Gastrocnemius medialis (tissue), 4 donors: ENCODE measurements at regions of chr4 and their contacts with region 1.

Region 1: GRCh38 chr4:94451695-94452475 is at the start of gene PDLIM5:
- DNase-seq: peak; percentile 88 to 92
- ATAC-seq: peak; percentile 74 to 78
- H3K4me3 ChIP-seq: peak within 1 kb of the TSS; percentile 81 to 96 (median 90)
- H3K27ac ChIP-seq: peak within 1 kb of the TSS; percentile 93 to 99 (median 99)
- H3K4me1 ChIP-seq: peaks cover 28 to 43% of the 10 kb centered on the region in 2 donors
- H3K27me3 ChIP-seq: no peaks in the 10 kb centered on the region
- CTCF ChIP-seq: no peak
- POLR2A ChIP-seq: peak; percentile 99
- total RNA-seq, gene PDLIM5: 473 to 833 (median 673) TPM

Region 2: GRCh38 chr4:94534401-94535312 is 82.8 kb after region 1 on chr4:
- in situ Hi-C with region 1: no loop called
- intact Hi-C with region 1: loop called (anchors 2 kb)
- DNase-seq: no peak
- ATAC-seq: peak; percentile 78 to 90
- H3K4me3 ChIP-seq: peak overlapping the region in 1 of 4 donors; percentile 3
- H3K27ac ChIP-seq: peak overlapping the region; percentile 68 to 85 (median 82)
- H3K4me1 ChIP-seq: peaks cover 95 to 100% of the 10 kb centered on the region in 2 donors
- H3K27me3 ChIP-seq: no peaks in the 10 kb centered on the region
- CTCF ChIP-seq: no peak
- POLR2A ChIP-seq: no peak

Region 3: DNA sequence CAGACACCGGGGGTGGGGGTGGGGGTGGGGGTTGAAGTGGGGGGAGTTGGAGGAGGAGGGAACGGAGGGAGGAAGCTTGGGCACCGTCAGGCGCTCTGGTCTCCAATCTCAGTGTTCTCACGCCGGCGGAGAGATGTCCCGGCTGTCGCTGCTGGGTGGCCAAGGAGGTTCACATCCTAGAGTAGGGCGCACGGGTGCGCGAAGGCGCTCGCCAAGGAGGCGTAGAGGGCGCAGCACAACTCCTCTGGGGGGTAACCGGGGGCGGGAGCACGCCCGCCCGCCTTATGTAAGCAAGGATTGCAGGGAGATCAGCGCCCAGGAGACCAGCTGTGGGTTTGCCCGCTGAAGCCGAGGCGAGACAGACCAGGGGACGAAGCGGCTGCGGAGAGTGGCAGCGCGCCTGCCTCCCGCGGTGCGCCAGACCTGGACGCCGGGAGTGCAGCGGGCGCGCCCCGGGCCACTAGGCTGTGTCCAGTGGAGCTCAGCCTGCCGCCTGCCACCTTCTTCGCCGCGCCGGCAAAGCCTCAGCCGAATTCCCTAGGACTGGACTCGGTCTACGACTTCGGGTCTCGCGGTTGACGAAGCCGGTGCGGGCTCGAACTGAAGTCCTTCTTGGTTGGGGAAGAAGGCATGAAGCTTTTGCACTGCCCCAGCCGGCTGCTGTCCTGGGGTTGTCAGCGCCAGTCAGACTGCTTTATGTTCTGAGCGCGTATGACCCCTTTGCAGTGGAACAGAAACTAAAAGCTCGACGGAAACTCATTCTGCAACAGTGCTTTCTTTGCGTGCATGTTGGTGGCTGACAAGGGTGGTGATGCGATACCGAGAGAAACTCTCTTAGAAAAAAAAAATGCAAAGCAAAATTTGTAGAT is 1097.6 kb after region 1 on chr4:
- in situ Hi-C with region 1: no loop called
- intact Hi-C with region 1: no loop called
- DNase-seq: no peak
- ATAC-seq: peak; percentile 8 to 16
- H3K4me3 ChIP-seq: peak overlapping the region; percentile 52 to 58 (median 54)
- H3K27ac ChIP-seq: peak overlapping the region in 2 of 4 donors; percentile 1 to 40
- H3K4me1 ChIP-seq: peaks cover 0 to 6% of the 10 kb centered on the region in 2 donors
- H3K27me3 ChIP-seq: peaks cover 32 to 43% (median 33%) of the 10 kb centered on the region in 3 donors
- CTCF ChIP-seq: no peak
- POLR2A ChIP-seq: no peak